A549 (cell line): ENCODE measurements at regions of chr11 and their contacts with region 1.

Region 1: DNA sequence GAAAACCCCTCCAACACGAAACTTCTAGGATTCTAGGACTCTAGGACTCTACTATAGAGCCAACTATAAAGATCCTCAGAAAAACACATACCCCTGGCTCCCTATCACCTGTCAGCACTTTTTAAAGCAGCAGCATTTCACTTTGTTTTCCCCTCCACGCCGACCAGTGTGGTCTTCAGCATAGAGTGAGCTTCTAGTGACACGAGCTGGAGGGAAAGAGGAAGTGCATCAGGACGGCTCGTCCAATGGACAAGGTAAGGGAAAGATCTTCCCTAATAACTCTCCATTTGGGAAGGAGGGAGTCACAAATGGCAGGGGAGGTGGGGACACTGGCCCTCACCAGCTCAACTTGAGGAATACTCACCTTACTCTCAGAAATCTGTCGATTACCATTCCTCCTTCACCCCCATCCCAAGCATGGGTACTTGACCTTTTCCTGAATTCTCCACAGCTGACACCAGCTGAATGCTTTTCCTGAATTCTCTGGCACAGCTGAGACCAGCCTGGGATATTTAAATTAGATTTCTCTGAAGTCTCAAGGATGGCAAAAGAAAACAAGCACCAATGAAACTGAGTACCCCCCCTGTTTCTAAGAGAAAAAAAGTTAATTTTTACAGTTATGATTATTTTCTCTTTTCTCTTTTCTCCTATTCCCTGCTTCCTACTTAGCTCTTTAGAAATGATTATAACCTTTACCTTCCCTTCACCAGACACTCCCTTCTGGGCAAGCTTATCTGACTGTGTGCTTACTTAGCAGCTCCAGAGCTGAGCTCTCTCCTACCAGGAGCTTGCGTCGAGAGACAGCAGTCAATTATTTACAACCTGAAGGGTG is 33.3 kb upstream of the NNMT start:
- DNase-seq: peak; percentile 26 to 50
- ATAC-seq: peak; percentile 85 to 90; a peak in 5 of 6 replicates
- H3K4me3 ChIP-seq: no peak overlapping the region
- H3K27ac ChIP-seq: no peak overlapping the region
- H3K4me1 ChIP-seq: 0 out of 3 replicates have a peak, but pooled peaks cover 5% of the 10 kb centered on the region
- CTCF ChIP-seq: peak; percentile 55; the same call in 2 of the 3 replicates
- EP300 ChIP-seq: no peak
- POLR2A ChIP-seq: no peak
- RAD21 ChIP-seq: peak; percentile 70 to 76

Region 2: GRCh38 chr11:113906038-113906437 is 356.9 kb before region 1 on chr11:
- CTCF ChIA-PET with region 1: interaction called, 240 read pairs
- POLR2A ChIA-PET with region 1: no interaction called
- DNase-seq: peak; percentile 10 to 54
- ATAC-seq: peak; percentile 62 to 72; a peak in 4 of 6 replicates
- H3K4me3 ChIP-seq: no peak overlapping the region
- H3K27ac ChIP-seq: no peak overlapping the region
- H3K4me1 ChIP-seq: peaks cover 8% of the 10 kb centered on the region; the same call in 2 of the 3 replicates
- CTCF ChIP-seq: 0 out of 3 replicates have a peak, but pooled peaks have one; percentile 14
- EP300 ChIP-seq: no peak
- POLR2A ChIP-seq: no peak
- RAD21 ChIP-seq: no peak

Region 3: GRCh38 chr11:114015119-114015518 is 247.8 kb before region 1 on chr11:
- CTCF ChIA-PET with region 1: interaction called, 13 read pairs
- POLR2A ChIA-PET with region 1: no interaction called
- DNase-seq: no peak
- ATAC-seq: peak; percentile 28 to 54; a peak in 2 of 6 replicates
- H3K4me3 ChIP-seq: no peak overlapping the region
- H3K27ac ChIP-seq: no peak overlapping the region
- H3K4me1 ChIP-seq: no peaks in the 10 kb centered on the region
- CTCF ChIP-seq: no peak
- EP300 ChIP-seq: no peak
- POLR2A ChIP-seq: no peak
- RAD21 ChIP-seq: no peak

Region 4: DNA sequence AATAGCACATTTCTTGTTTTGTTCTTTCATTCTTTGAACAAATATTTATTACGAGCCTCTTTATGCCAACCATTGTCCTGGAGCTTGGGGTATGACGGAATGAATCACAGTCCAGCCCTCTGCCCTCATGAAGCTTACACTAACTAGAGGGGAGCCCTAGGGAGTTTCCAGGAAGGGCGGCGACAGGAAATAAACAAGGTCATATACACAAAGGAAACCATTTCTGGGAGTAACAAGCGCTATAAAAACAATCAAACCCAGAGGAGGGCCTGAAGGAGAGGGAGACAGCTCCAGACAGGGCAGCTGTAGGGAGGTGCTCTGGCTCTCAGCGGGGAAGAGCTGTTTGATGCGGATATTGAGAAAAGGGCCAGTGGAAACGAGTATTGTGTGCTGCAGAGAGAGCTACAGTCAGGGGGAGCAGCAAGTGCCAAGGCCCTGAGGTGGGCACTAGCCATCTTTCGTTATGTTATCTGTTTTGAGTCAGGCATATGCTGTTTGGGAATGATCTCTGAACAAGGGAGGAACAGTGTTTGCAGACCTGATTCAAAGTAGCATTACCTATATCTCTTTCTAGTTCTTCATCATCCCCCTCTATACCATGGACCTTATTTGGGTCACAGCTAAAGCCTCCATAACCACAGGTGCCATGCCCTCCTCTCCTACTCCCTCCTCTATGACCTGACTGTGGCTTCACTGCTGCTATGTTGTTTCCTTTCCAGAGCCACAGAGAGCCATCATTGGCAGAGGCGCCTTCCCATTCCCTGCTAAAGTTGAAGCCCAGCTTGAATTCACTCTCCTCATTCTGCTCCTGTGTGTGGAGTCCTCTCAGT is 218.6 kb before region 1 on chr11:
- CTCF ChIA-PET with region 1: interaction called, 142 read pairs
- POLR2A ChIA-PET with region 1: no interaction called
- DNase-seq: peak in 1 of 2 experiments; percentile 20
- ATAC-seq: peak in 1 of 2 experiments; percentile 50; a peak in 4 of 6 replicates
- H3K4me3 ChIP-seq: no peak overlapping the region
- H3K27ac ChIP-seq: no peak overlapping the region
- H3K4me1 ChIP-seq: peaks cover 4% of the 10 kb centered on the region; the same call in 2 of the 3 replicates
- CTCF ChIP-seq: no peak
- EP300 ChIP-seq: no peak
- POLR2A ChIP-seq: no peak
- RAD21 ChIP-seq: no peak

Region 5: DNA sequence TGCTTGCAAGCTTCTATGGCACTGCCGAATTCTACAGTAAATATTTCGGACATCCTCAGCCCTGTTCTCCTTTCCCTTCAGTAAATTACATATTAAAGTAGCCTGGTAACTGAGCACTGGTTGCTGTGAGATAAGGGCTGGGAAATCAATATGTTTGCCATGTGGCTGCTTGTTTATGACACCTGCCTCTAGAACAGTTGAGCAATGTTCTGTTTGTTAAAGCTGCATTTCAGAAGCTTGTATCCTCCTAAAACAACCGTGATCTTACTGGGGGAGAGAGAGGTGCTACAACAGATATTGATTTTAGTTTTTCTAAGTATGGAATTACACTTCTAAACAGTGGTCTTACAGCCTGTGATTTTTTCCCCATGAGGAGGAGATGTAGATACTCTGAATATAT is 164.0 kb before region 1 on chr11:
- CTCF ChIA-PET with region 1: no interaction called
- POLR2A ChIA-PET with region 1: no interaction called
- DNase-seq: no peak
- ATAC-seq: no peak
- H3K4me3 ChIP-seq: no peak overlapping the region
- H3K27ac ChIP-seq: no peak overlapping the region
- H3K4me1 ChIP-seq: no peaks in the 10 kb centered on the region
- CTCF ChIP-seq: no peak
- EP300 ChIP-seq: no peak
- POLR2A ChIP-seq: no peak
- RAD21 ChIP-seq: no peak

Region 6: GRCh38 chr11:114109206-114110090 is 153.4 kb before region 1 on chr11:
- CTCF ChIA-PET with region 1: interaction called, 10 read pairs
- POLR2A ChIA-PET with region 1: no interaction called
- DNase-seq: no peak
- ATAC-seq: no peak
- H3K4me3 ChIP-seq: no peak overlapping the region
- H3K27ac ChIP-seq: no peak overlapping the region
- H3K4me1 ChIP-seq: no peaks in the 10 kb centered on the region
- CTCF ChIP-seq: no peak
- EP300 ChIP-seq: no peak
- POLR2A ChIP-seq: no peak
- RAD21 ChIP-seq: no peak

Region 7: DNA sequence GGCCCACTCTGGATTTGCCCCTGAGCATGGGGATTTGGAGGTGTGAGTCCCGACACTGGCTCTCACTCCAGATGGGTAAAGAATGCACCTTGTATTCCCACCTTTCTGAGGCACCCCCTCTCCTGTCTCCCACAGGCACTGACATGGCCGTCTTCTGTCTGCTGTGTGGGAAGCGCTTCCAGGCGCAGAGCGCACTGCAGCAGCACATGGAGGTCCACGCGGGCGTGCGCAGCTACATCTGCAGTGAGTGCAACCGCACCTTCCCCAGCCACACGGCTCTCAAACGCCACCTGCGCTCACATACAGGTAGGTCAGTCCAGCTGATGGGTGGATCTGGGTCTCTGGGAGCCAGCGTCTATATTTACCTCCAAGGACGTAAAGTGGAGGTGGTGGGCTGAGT is 20.9 kb before region 1 on chr11:
- CTCF ChIA-PET with region 1: interaction called, 56 read pairs
- POLR2A ChIA-PET with region 1: no interaction called
- DNase-seq: no peak
- ATAC-seq: no peak
- H3K4me3 ChIP-seq: no peak overlapping the region
- H3K27ac ChIP-seq: no peak overlapping the region
- H3K4me1 ChIP-seq: no peaks in the 10 kb centered on the region
- CTCF ChIP-seq: no peak
- EP300 ChIP-seq: no peak
- POLR2A ChIP-seq: no peak
- RAD21 ChIP-seq: no peak

Region 8: GRCh38 chr11:114280696-114281095 is 17.8 kb after region 1 on chr11:
- CTCF ChIA-PET with region 1: interaction called, 44 read pairs
- POLR2A ChIA-PET with region 1: no interaction called
- DNase-seq: peak; percentile 67 to 89
- ATAC-seq: peak; percentile 93 to 96
- H3K4me3 ChIP-seq: no peak overlapping the region
- H3K27ac ChIP-seq: peak overlapping the region; percentile 97 to 100
- H3K4me1 ChIP-seq: peaks cover 51% of the 10 kb centered on the region
- CTCF ChIP-seq: peak; percentile 72
- EP300 ChIP-seq: no peak
- POLR2A ChIP-seq: no peak
- RAD21 ChIP-seq: peak; percentile 93 to 94

Region 9: DNA sequence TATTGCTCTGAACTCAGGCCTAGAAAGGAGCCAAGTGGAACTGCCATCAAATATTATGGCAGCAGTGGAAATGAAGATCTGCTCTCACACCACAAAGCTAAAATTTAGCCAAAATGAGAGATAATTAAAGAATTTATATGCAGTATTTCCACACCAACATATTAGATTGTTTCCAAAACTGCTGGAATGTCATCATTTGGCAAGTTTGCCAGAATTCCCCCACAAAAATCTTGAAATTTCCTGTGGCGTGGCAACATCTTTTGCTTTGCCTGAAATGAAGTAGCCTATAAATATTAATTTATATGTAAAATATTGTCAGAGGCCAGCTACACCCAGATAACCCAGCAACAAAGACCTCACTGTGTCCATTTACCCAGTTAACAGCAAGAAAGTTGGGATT is 123.6 kb after region 1 on chr11:
- CTCF ChIA-PET with region 1: no interaction called
- POLR2A ChIA-PET with region 1: no interaction called
- DNase-seq: no peak
- ATAC-seq: no peak
- H3K4me3 ChIP-seq: no peak overlapping the region
- H3K27ac ChIP-seq: no peak overlapping the region
- H3K4me1 ChIP-seq: no peaks in the 10 kb centered on the region
- CTCF ChIP-seq: no peak
- EP300 ChIP-seq: no peak
- POLR2A ChIP-seq: no peak
- RAD21 ChIP-seq: no peak